IMR-90 (cell line): ENCODE measurements at regions of chr19 and their contacts with region 1.

Region 1: GRCh38 chr19:35975608-35976214 is 19.3 kb upstream of the SDHAF1 start:
- DNase-seq: peak; percentile 26
- ATAC-seq: peak; percentile 60; the same call in 1 of the 2 replicates
- H3K4me3 ChIP-seq: no peak overlapping the region
- H3K27ac ChIP-seq: no peak overlapping the region
- H3K4me1 ChIP-seq: no peaks in the 10 kb centered on the region
- H3K27me3 ChIP-seq: peaks cover 9% of the 10 kb centered on the region
- CTCF ChIP-seq: no peak
- POLR2A ChIP-seq: no peak
- RAD21 ChIP-seq: no peak

Region 2: GRCh38 chr19:35963514-35963913 is 12.2 kb before region 1 on chr19:
- CTCF ChIA-PET with region 1: no interaction called
- POLR2A ChIA-PET with region 1: no interaction called
- dilution Hi-C with region 1: no loop called
- in situ Hi-C with region 1: no loop called
- intact Hi-C with region 1: loop called (anchors 1 kb)
- DNase-seq: peak; percentile 56
- ATAC-seq: peak; percentile 91
- H3K4me3 ChIP-seq: no peak overlapping the region
- H3K27ac ChIP-seq: no peak overlapping the region
- H3K4me1 ChIP-seq: no peaks in the 10 kb centered on the region
- H3K27me3 ChIP-seq: peaks cover 20% of the 10 kb centered on the region
- CTCF ChIP-seq: no peak
- POLR2A ChIP-seq: no peak
- RAD21 ChIP-seq: no peak